Activated naive CD4-positive, alpha-beta T cell treated with anti-CD3 and anti-CD28 coated beads for 36 hours (primary cell): ENCODE measurements at regions of chr1 and their contacts with region 1.

Region 1: DNA sequence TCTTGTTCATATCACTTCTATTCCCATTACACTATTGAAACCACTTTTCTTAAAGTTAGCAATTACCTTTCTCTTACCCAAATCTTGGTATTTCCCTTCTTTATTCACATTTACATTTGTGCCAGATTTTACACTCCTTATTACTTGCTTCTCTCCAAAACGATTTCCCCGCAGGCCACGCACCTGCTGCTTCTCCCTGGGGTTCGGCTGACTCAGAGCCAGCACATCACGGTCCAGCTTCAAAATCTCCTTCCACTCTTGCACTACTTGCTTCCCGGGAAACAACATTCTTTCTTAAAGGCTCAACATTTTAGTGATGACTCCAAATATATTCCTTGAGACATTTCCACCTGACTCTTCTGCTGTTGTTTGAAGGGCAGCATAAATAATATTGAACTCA is 20.7 kb downstream of the LHX9 start:
- DNase-seq: no peak
- H3K4me3 Mint-ChIP-seq: no peak overlapping the region
- H3K27ac Mint-ChIP-seq: no peak overlapping the region
- H3K4me1 Mint-ChIP-seq: no peaks in the 10 kb centered on the region
- H3K27me3 Mint-ChIP-seq: peaks cover 8% of the 10 kb centered on the region

Region 2: GRCh38 chr1:197783510-197783948 is 154.4 kb before region 1 on chr1:
- CTCF ChIA-PET with region 1: no interaction called
- intact Hi-C with region 1: no loop called
- DNase-seq: no peak
- H3K4me3 Mint-ChIP-seq: no peak overlapping the region
- H3K27ac Mint-ChIP-seq: no peak overlapping the region
- H3K4me1 Mint-ChIP-seq: peaks cover 9% of the 10 kb centered on the region
- H3K27me3 Mint-ChIP-seq: no peaks in the 10 kb centered on the region

Region 3: DNA sequence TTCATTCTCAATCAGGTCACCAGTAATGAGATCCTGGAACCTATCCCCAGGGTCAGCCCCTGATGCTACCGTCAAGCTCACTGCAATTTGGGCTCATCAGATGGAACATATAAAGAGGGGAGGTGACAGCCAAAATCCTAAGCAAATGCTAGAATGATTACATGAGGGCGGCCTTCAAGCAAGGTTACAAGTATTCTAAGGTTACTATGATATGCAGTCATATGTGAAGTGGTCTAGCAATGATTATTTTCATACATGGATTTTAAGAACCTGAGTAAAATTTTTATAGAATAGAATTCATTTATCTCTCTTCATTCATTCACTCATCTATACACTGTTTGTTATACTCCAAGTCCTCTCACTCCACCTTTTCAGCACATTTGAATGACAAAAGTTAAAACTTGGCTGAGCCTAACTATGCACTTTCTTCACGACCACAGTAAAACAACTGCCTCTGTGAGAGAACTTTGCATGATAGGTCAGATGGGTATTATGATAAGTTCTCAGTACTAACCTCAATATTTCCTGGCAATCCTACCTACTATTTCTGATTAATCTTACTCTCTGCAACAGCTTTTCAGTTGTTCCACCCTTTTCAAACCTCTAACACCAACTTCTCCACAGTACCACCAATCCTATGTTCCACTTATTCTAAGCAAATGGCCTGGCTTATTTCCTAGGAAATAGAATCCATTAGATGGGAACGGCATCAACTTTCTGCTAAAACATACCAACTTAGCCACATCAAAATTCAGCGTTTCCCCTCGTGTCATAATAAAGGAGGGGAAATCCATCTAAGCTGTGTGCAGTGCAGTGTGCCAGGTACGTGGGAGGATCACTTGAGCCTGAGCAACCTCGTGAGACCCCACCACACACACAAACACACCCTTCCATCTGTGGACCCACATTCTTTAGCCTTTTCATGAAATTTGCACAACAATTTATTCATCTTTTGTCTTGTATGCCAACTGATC is 11.3 kb after region 1 on chr1:
- CTCF ChIA-PET with region 1: no interaction called
- intact Hi-C with region 1: loop called (anchors 1 kb)
- DNase-seq: peak; percentile 45
- H3K4me3 Mint-ChIP-seq: peak overlapping the region; percentile 10
- H3K27ac Mint-ChIP-seq: peak overlapping the region; percentile 69
- H3K4me1 Mint-ChIP-seq: peaks cover 21% of the 10 kb centered on the region
- H3K27me3 Mint-ChIP-seq: no peaks in the 10 kb centered on the region